GM13977 (cell line): ENCODE measurements at regions of chr11 and their contacts with region 1.

Region 1: GRCh38 chr11:128172046-128172878 is 415.1 kb downstream of the ETS1 start:
- DNase-seq: peak; percentile 72
- CTCF ChIP-seq: peak; percentile 82

Region 2: GRCh38 chr11:128279866-128280265 is 107.6 kb after region 1 on chr11:
- in situ Hi-C with region 1: loop called (anchors 10 kb)
- DNase-seq: no peak
- CTCF ChIP-seq: no peak

Region 3: GRCh38 chr11:128859563-128860441 is 687.5 kb after region 1 on chr11:
- in situ Hi-C with region 1: loop called (anchors 10 kb)
- DNase-seq: peak; percentile 83
- CTCF ChIP-seq: peak; percentile 98